ENCODE measurements at regions of chrX and their contacts with region 1.

Region 1: GRCh38 chrX:42128020-42128419 is 204.7 kb upstream of the CASK start:
- DNase-seq: no peak
- H3K4me3 Mint-ChIP-seq: peak overlapping the region; percentile 8
- H3K27ac Mint-ChIP-seq: peak overlapping the region; percentile 73
- H3K4me1 Mint-ChIP-seq: peaks cover 45% of the 10 kb centered on the region
- H3K27me3 Mint-ChIP-seq: peaks cover 2% of the 10 kb centered on the region

Region 2: GRCh38 chrX:40933132-40933705 is 1194.8 kb before region 1 on chrX:
- intact Hi-C with region 1: no loop called
- DNase-seq: peak; percentile 12
- H3K4me3 Mint-ChIP-seq: peak overlapping the region; percentile 54
- H3K27ac Mint-ChIP-seq: peak overlapping the region; percentile 90
- H3K4me1 Mint-ChIP-seq: peaks cover 17% of the 10 kb centered on the region
- H3K27me3 Mint-ChIP-seq: no peaks in the 10 kb centered on the region

Region 3: GRCh38 chrX:41796577-41796976 is 331.4 kb before region 1 on chrX:
- intact Hi-C with region 1: loop called (anchors 5 kb)
- DNase-seq: no peak
- H3K4me3 Mint-ChIP-seq: no peak overlapping the region
- H3K27ac Mint-ChIP-seq: no peak overlapping the region
- H3K4me1 Mint-ChIP-seq: peaks cover 17% of the 10 kb centered on the region
- H3K27me3 Mint-ChIP-seq: no peaks in the 10 kb centered on the region

Region 4: DNA sequence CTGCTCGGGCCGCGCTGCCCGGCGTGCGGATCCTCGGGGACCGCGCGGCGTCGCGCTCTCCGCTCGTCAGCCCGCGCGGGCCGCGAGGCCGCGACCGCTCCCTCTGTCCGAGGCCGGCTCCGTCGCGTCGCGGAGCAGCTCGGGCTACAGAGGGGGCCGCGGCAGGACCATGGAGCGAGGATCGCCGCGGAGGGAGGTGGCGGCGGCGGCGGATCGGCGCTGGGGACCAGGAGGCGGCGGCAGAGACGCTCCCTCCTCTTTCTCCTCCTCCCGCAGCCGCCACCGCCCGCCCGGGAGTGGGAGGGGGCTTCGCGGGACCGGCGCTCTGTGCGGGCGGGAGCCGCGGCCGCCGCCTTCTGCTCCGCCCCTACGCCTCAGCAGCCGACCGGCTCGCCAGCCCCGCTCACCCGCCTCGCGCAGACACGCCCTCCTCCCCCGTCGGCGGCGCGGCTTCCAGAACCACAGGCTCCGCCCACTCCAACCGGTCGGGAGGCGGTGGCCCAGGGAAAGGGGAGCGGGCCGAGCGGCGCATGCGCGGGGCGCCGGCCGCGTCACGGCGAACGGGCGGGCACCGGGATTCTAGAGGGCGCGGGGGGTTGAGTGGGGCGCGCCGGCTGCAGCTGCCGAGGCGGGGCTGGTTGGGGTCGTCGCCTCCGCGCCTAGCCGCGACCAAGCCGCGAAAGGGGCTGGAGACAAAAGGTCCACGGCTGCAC is 204.6 kb before region 1 on chrX and contains the start of gene CASK:
- intact Hi-C with region 1: loop called (anchors 2 kb)
- DNase-seq: peak; percentile 86
- H3K4me3 Mint-ChIP-seq: peak within 1 kb of the TSS; percentile 88
- H3K27ac Mint-ChIP-seq: peak within 1 kb of the TSS; percentile 87
- H3K4me1 Mint-ChIP-seq: peaks cover 36% of the 10 kb centered on the region
- H3K27me3 Mint-ChIP-seq: no peaks in the 10 kb centered on the region
- total RNA-seq, gene CASK: 18.6 and 19.4 TPM in 2 replicates

Region 5: GRCh38 chrX:42073448-42073847 is 54.6 kb before region 1 on chrX:
- intact Hi-C with region 1: loop called (anchors 10 kb)
- DNase-seq: no peak
- H3K4me3 Mint-ChIP-seq: no peak overlapping the region
- H3K27ac Mint-ChIP-seq: no peak overlapping the region
- H3K4me1 Mint-ChIP-seq: peaks cover 5% of the 10 kb centered on the region
- H3K27me3 Mint-ChIP-seq: no peaks in the 10 kb centered on the region

Region 6: DNA sequence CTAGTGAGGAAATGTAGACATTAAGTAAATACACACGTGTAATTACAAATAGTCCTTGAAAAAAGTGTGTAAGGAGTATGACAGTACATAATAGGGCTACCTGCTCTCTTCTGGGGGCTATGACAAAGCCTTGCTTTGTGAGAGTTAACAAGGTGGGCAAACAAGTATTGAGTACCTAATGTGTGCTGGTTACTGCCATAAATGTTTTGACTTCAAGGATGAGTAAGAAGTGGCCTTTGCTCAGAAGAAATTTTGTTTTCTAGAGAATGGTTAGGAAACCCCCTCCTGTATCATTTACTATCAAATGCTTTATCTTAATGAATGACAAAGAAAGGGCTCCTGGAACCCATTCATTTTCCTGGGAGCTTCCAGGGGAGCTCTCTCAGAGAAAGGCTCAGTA is 37.6 kb before region 1 on chrX:
- intact Hi-C with region 1: loop called (anchors 2 kb)
- DNase-seq: no peak
- H3K4me3 Mint-ChIP-seq: no peak overlapping the region
- H3K27ac Mint-ChIP-seq: peak overlapping the region; percentile 67
- H3K4me1 Mint-ChIP-seq: peaks cover 21% of the 10 kb centered on the region
- H3K27me3 Mint-ChIP-seq: no peaks in the 10 kb centered on the region

Region 7: DNA sequence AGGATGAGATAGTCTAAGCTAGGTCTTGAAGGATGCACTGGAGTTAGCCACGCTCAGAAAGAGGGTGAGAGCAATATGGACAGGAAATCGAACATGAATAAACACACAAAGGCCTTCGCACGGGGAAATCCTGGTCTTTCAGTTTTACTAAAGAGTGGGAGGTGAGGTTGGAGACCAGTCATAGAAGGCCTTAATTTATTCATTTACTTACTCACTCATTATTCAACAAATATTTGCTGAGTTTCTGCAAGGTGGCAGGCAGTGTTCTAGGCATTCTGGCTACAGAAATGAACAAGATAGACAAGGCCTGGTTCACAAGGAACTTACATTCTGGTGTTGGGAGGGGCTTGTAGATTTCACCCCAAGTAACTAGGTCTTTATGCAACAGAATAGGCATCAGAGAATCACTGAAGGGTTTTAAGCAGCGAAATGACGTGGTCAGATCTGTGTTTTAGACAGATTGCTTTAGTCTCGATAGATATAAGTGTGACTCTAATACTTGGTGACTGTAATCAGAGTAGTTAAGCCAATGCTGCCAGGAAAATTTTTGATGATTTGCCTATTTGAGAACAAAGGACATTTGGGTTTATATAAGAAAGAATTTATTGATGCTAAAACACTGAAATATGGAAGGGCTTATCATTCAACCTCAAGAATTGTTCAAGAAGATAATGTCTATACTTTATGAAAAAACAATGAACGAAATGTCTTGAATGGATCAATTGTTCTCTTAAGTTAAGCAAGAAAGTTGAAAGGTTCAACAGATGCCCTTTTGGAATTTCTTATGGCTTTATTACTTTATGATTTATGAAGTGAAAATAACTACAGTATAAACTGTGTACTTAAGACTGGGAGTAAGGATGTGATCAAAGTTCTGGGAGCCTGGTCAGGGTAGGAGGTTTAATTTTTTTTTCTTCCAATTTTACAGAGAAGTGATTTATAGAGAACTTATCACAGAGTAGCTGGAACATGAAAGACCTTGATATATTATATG is 20.2 kb before region 1 on chrX:
- intact Hi-C with region 1: loop called (anchors 2 kb)
- DNase-seq: no peak
- H3K4me3 Mint-ChIP-seq: no peak overlapping the region
- H3K27ac Mint-ChIP-seq: no peak overlapping the region
- H3K4me1 Mint-ChIP-seq: peaks cover 25% of the 10 kb centered on the region
- H3K27me3 Mint-ChIP-seq: no peaks in the 10 kb centered on the region

Region 8: GRCh38 chrX:42149765-42150164 is 21.7 kb after region 1 on chrX:
- intact Hi-C with region 1: no loop called
- DNase-seq: no peak
- H3K4me3 Mint-ChIP-seq: no peak overlapping the region
- H3K27ac Mint-ChIP-seq: no peak overlapping the region
- H3K4me1 Mint-ChIP-seq: peaks cover 5% of the 10 kb centered on the region
- H3K27me3 Mint-ChIP-seq: no peaks in the 10 kb centered on the region

Region 9: GRCh38 chrX:42260854-42261253 is 132.8 kb after region 1 on chrX:
- intact Hi-C with region 1: no loop called
- DNase-seq: no peak
- H3K4me3 Mint-ChIP-seq: no peak overlapping the region
- H3K27ac Mint-ChIP-seq: no peak overlapping the region
- H3K4me1 Mint-ChIP-seq: no peaks in the 10 kb centered on the region
- H3K27me3 Mint-ChIP-seq: peaks cover 2% of the 10 kb centered on the region

Measured in activated T-helper 2 cell treated with anti-CD3 and anti-CD28 coated beads, Interferon-gamma antibody, Interleukin-2, Interleukin-4, amounts not matched to agents 10 μg/mL and 5 μg/mL and 100 μg/mL, durations not matched to agents 14 hours and 24 hours and 36 hours (primary cell).